Activated CD8-positive, alpha-beta T cell treated with anti-CD3 and anti-CD28 coated beads, Interleukin-2, amount 10 ng/mL, durations not matched to agents 7 days and 5 days (primary cell): ENCODE measurements at regions of chr13 and their contacts with region 1.

Region 1: GRCh38 chr13:45367358-45367757 is 26.4 kb upstream of the TPT1 start:
- DNase-seq: peak; percentile 96
- ATAC-seq: peak; percentile 99
- H3K4me3 Mint-ChIP-seq: peak overlapping the region; percentile 12
- H3K27ac Mint-ChIP-seq: peak overlapping the region; percentile 90
- H3K4me1 Mint-ChIP-seq: peaks cover 70% of the 10 kb centered on the region
- H3K27me3 Mint-ChIP-seq: no peaks in the 10 kb centered on the region

Region 2: DNA sequence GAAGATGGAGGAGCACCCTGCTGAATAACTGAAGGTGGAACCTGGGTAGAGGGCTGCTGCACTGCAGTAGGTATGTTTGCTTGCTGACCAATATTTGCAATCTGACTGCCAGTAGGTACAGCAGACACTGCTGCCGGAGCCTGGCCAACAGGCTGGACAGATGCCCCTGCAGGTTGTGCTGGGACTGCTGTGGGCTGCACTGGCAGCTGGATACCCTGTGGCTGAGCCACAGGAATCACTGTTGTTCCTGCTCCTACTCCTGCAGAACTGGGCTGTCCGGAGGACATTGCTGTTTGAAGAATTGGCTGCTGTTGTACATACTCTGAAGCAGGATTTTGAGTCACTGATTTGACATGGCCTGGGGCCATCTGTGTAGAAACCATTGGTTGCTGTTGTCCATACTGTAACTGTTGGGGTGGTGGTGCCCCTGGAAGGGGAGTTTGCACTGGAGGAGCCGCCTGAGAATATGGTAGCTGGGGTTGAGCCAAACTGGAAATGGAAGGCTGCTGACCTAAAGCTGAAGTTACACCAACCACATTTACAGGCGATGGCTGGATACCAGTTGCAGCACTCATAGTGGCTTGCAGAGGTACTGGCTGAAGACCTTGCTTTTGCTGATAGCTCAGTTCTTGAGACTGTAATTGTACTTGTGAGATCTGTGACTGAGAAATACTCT is 793.4 kb before region 1 on chr13:
- CTCF ChIA-PET with region 1: no interaction called
- POLR2A ChIA-PET with region 1: no interaction called
- DNase-seq: peak; percentile 24
- ATAC-seq: no peak
- H3K4me3 Mint-ChIP-seq: no peak overlapping the region
- H3K27ac Mint-ChIP-seq: no peak overlapping the region
- H3K4me1 Mint-ChIP-seq: peaks cover 43% of the 10 kb centered on the region
- H3K27me3 Mint-ChIP-seq: peaks cover 5% of the 10 kb centered on the region

Region 3: GRCh38 chr13:45356966-45357672 is 10.2 kb before region 1 on chr13:
- CTCF ChIA-PET with region 1: interaction called, 17 read pairs
- POLR2A ChIA-PET with region 1: interaction called, 3 read pairs
- DNase-seq: peak; percentile 47
- ATAC-seq: peak; percentile 70
- H3K4me3 Mint-ChIP-seq: peak overlapping the region; percentile 10
- H3K27ac Mint-ChIP-seq: peak overlapping the region; percentile 89
- H3K4me1 Mint-ChIP-seq: peaks cover 44% of the 10 kb centered on the region
- H3K27me3 Mint-ChIP-seq: no peaks in the 10 kb centered on the region

Region 4: DNA sequence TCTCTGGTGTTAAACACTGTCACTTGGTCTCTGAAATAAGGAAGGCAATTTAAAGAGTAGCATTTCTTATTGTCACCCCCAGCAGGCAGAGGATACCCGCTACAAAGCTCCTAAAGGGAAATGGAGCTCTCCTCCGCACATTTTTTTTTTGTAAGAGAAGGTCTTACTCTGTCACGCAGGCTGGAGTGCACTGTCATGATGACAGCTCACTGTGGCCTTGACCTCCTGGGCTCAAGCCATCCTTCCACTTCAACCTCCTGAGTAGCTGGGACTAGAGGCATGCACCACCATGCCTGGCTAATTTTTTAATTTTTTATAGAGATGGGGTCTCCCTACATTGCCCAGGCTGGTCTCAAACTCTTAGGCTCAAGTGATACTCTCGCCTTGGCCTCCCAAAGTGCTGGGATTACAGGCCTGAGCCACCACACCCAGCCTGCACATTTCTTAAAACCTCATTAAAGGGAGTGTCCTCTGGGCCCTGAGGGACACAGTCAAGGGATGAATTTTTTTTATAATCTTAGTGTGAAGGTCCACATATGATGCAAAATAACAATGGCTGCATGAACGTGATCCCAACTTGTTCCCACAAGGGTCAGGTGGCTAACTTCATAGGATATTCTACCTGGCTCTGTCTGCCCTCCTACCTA is 18.7 kb after region 1 on chr13:
- CTCF ChIA-PET with region 1: interaction called, 144 read pairs
- POLR2A ChIA-PET with region 1: no interaction called
- DNase-seq: no peak
- ATAC-seq: no peak
- H3K4me3 Mint-ChIP-seq: no peak overlapping the region
- H3K27ac Mint-ChIP-seq: no peak overlapping the region
- H3K4me1 Mint-ChIP-seq: peaks cover 17% of the 10 kb centered on the region
- H3K27me3 Mint-ChIP-seq: no peaks in the 10 kb centered on the region

Region 5: DNA sequence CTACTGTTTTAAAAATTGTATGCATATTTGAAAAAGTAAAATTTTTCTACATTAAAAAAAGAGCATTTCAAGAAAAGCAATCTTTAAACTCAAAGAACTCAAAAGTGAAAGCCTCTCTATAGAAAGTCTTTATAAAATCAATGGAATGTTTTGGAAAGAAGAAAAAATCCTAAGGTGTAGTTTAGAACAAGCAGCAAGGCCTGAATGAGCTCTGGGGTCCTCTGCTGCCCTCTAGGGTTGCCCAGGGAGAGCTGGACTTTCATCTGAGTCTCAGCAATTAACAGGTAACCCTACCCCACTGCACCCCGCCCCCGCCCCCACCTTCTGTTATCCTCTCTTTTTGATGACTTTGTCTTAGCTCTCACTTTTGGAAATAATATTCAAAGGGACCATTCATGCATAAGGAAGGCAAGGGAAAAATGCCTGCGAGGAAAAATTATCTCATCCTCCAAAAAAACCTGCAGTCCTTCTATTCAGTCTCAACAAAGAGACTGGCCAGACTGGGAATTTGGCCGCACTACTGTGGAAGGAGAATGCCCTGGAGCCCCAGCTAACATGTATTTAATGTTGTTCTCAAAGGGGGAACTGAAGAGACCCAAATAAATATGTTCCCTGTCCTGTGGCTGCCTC is 26.7 kb after region 1 on chr13:
- CTCF ChIA-PET with region 1: interaction called, 144 read pairs
- POLR2A ChIA-PET with region 1: interaction called, 4 read pairs
- DNase-seq: peak; percentile 58
- ATAC-seq: no peak
- H3K4me3 Mint-ChIP-seq: no peak overlapping the region
- H3K27ac Mint-ChIP-seq: peak overlapping the region; percentile 24
- H3K4me1 Mint-ChIP-seq: peaks cover 46% of the 10 kb centered on the region
- H3K27me3 Mint-ChIP-seq: no peaks in the 10 kb centered on the region

Region 6: GRCh38 chr13:45417790-45418534 is 50.6 kb after region 1 on chr13 and contains the start of gene SLC25A30:
- CTCF ChIA-PET with region 1: interaction called, 24 read pairs
- POLR2A ChIA-PET with region 1: interaction called, 6 read pairs
- DNase-seq: peak; percentile 94
- ATAC-seq: peak; percentile 95
- H3K4me3 Mint-ChIP-seq: peak within 1 kb of the TSS; percentile 91
- H3K27ac Mint-ChIP-seq: peak within 1 kb of the TSS; percentile 95
- H3K4me1 Mint-ChIP-seq: peaks cover 13% of the 10 kb centered on the region
- H3K27me3 Mint-ChIP-seq: no peaks in the 10 kb centered on the region
- total RNA-seq, gene SLC25A30: 19.0 to 19.7 TPM

Region 7: DNA sequence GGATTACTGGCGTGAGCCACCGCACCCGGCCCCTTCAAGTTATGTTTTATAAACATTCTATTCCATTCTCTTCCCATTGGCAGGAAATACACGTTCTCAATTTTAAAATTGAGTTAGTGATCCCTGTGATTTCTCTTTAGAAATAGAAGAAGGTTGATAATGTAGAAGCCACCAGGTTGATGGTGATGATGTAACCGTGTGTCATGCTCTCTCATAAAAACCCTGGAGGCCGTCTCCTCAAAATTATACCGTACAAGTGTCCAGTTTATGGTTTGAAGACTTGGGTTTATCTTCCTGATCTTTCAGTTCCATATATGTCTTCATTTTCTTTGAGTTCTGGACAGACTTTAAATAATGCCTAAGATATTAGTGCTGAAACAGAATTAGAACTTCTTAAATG is 129.6 kb after region 1 on chr13:
- CTCF ChIA-PET with region 1: no interaction called
- POLR2A ChIA-PET with region 1: no interaction called
- DNase-seq: no peak
- ATAC-seq: no peak
- H3K4me3 Mint-ChIP-seq: no peak overlapping the region
- H3K27ac Mint-ChIP-seq: no peak overlapping the region
- H3K4me1 Mint-ChIP-seq: peaks cover 11% of the 10 kb centered on the region
- H3K27me3 Mint-ChIP-seq: no peaks in the 10 kb centered on the region